ENCODE measurements at regions of chr16 and their contacts with region 1.

Region 1: GRCh38 chr16:85690469-85691064 is 1.8 kb upstream of the GINS2 start:
- DNase-seq: no peak
- ATAC-seq: no peak
- H3K4me3 Mint-ChIP-seq: no peak overlapping the region
- H3K27ac Mint-ChIP-seq: no peak overlapping the region
- H3K4me1 Mint-ChIP-seq: peaks cover 16% of the 10 kb centered on the region
- H3K27me3 Mint-ChIP-seq: peaks cover 17% of the 10 kb centered on the region

Region 2: GRCh38 chr16:85586380-85587104 is 104.0 kb before region 1 on chr16:
- CTCF ChIA-PET with region 1: no interaction called
- DNase-seq: no peak
- ATAC-seq: no peak
- H3K4me3 Mint-ChIP-seq: no peak overlapping the region
- H3K27ac Mint-ChIP-seq: no peak overlapping the region
- H3K4me1 Mint-ChIP-seq: no peaks in the 10 kb centered on the region
- H3K27me3 Mint-ChIP-seq: no peaks in the 10 kb centered on the region

Region 3: GRCh38 chr16:85675251-85675927 is 15.2 kb before region 1 on chr16:
- CTCF ChIA-PET with region 1: interaction called, 10 read pairs
- DNase-seq: no peak
- ATAC-seq: peak; percentile 24
- H3K4me3 Mint-ChIP-seq: no peak overlapping the region
- H3K27ac Mint-ChIP-seq: peak overlapping the region; percentile 53
- H3K4me1 Mint-ChIP-seq: peaks cover 18% of the 10 kb centered on the region
- H3K27me3 Mint-ChIP-seq: no peaks in the 10 kb centered on the region

Measured in activated CD8-positive, alpha-beta memory T cell treated with anti-CD3 and anti-CD28 coated beads, Interleukin-2, amount 10 ng/mL, durations not matched to agents 7 days and 5 days (primary cell).